ENCODE measurements at regions of chr12 and their contacts with region 1.

Region 1: GRCh38 chr12:51341259-51342007 is 5.0 kb downstream of the CELA1 start:
- DNase-seq: peak; percentile 76
- H3K4me3 Mint-ChIP-seq: no peak overlapping the region
- H3K27ac Mint-ChIP-seq: no peak overlapping the region
- H3K4me1 Mint-ChIP-seq: peaks cover 11% of the 10 kb centered on the region
- H3K27me3 Mint-ChIP-seq: no peaks in the 10 kb centered on the region

Region 2: GRCh38 chr12:51217968-51218606 is 123.3 kb before region 1 on chr12 and contains the start of gene POU6F1:
- CTCF ChIA-PET with region 1: interaction called, 17 read pairs
- POLR2A ChIA-PET with region 1: no interaction called
- DNase-seq: peak; percentile 72
- H3K4me3 Mint-ChIP-seq: peak within 1 kb of the TSS; percentile 79
- H3K27ac Mint-ChIP-seq: peak within 1 kb of the TSS; percentile 65
- H3K4me1 Mint-ChIP-seq: peaks cover 16% of the 10 kb centered on the region
- H3K27me3 Mint-ChIP-seq: no peaks in the 10 kb centered on the region
- total RNA-seq, gene POU6F1: 4.1 to 4.8 TPM

Region 3: DNA sequence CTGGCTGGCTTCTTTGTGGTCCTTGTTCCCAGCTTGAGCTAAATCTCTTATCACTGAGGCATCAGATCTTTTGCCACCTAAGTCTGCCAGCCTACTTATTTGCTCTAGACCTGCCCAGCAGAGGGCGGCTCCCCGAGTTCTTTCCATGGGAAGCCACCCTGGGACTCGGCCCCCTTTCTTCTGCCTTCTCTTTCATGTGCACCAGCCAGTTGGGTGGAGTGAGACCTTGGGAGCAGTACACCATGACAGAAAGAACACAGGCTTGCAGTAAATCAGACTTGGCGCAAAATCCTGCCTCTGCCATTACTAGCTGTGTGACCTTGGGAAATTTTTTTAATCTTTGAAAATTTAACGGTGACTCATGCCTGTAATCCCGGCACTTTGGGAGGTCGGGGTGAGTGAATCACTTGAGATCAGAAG is 78.7 kb before region 1 on chr12:
- CTCF ChIA-PET with region 1: interaction called, 87 read pairs
- POLR2A ChIA-PET with region 1: interaction called, 3 read pairs
- DNase-seq: peak; percentile 48
- H3K4me3 Mint-ChIP-seq: no peak overlapping the region
- H3K27ac Mint-ChIP-seq: no peak overlapping the region
- H3K4me1 Mint-ChIP-seq: peaks cover 18% of the 10 kb centered on the region
- H3K27me3 Mint-ChIP-seq: peaks cover 2% of the 10 kb centered on the region

Region 4: DNA sequence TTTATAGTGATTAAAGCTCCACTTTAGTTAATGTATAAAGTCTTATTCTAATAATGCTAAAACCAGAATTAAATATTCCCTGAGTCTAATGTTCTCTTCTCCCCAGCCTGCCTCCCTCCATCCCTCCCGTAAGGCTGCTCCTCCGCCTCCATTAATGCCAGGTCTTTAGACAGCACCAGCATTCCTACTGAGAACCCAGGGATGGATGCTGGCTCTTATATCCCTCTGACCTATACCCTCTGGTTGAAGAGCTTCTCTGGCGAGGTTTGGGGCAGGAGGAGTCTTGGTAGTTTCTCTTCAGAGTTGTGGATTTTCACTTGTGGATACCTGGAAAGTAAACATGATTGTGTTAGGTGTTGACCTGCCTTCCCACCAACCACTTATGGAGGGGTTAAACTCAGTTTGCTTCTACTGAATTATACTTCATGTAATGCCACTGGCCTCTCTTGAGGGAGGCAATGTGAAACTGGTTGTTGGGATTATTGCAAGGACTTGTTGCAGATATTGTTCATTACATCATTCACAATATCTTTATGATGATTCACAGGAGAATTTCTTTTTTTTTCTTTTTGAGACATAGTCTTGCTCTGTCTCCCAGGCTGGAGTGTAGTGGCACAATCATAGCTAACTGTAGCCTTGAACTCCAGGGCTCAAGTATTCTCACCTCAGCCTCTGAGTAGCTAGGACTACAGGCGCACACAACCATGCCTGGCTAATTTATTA is 60.1 kb before region 1 on chr12:
- CTCF ChIA-PET with region 1: interaction called, 11 read pairs
- POLR2A ChIA-PET with region 1: no interaction called
- DNase-seq: no peak
- H3K4me3 Mint-ChIP-seq: no peak overlapping the region
- H3K27ac Mint-ChIP-seq: no peak overlapping the region
- H3K4me1 Mint-ChIP-seq: no peaks in the 10 kb centered on the region
- H3K27me3 Mint-ChIP-seq: no peaks in the 10 kb centered on the region

Region 5: DNA sequence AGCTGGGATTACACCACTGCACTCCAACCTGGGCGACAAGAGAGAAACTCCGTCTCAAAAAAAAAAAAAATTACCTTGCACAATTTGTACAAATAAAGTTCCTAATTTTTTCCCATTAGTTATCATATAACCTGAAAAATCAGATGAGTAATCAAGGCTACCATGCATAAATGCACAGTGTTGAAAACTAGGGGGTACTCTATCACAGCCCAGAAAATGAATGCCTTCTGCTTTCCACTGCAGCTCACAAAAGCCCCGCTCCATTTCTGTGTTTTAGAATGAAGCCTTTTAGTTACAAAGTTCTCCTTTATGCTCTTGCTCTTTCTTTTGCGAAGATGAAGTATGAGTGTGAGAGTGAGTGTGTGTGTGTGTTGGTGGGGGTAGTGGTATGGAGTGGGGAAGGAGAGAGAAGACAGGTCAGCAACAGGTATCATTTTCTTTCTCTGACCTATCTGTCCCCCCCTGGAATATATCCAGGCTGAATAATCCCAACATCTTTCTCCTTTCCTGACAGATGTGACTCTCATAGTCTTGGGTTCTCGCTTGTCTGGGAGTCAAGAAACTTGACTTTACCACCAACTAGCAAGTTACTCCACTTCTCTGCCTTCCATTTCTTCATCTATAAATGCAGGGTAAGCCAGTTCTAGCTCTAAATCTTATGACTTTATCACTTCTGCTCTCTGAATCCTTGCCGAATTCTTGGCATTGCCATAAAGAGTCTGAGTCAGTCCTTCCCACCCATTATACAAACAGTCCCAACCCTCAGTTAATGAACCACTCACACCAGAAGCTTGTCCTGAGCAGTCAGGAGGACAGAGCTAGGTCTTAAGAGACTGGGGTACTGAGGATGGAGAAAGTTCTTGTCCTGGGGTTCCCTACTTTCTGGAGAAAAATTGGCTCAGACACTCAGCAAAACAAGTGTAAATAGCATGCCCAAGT is 33.5 kb before region 1 on chr12:
- CTCF ChIA-PET with region 1: interaction called, 16 read pairs
- POLR2A ChIA-PET with region 1: no interaction called
- DNase-seq: no peak
- H3K4me3 Mint-ChIP-seq: no peak overlapping the region
- H3K27ac Mint-ChIP-seq: peak overlapping the region; percentile 47
- H3K4me1 Mint-ChIP-seq: peaks cover 39% of the 10 kb centered on the region
- H3K27me3 Mint-ChIP-seq: no peaks in the 10 kb centered on the region

Region 6: GRCh38 chr12:51326762-51327439 is 14.5 kb before region 1 on chr12:
- CTCF ChIA-PET with region 1: interaction called, 44 read pairs
- POLR2A ChIA-PET with region 1: interaction called, 65 read pairs
- DNase-seq: peak; percentile 24
- H3K4me3 Mint-ChIP-seq: peak overlapping the region; percentile 45
- H3K27ac Mint-ChIP-seq: peak overlapping the region; percentile 97
- H3K4me1 Mint-ChIP-seq: peaks cover 70% of the 10 kb centered on the region
- H3K27me3 Mint-ChIP-seq: peaks cover 2% of the 10 kb centered on the region

Region 7: DNA sequence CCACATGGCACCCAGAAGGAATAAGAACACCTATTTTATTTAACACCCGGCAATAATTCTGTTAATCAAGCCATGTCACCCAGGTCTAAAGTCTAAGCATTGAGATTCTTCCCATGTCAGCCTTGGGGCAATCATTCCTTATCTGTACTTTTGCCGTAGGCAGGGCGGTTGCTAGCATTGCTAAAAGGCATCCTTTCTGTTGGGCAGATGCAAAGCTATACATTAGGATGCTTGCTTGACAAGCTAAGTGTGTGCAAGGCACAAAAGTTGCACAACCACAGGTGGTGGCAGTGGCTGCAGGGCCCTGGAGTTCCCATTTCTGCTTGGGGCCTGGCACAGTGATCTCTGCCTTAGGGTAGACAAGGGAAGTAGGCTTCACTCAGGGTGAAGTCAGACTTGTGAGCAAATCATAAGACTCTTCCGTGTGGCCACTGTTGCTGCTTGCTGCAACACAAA is 62.3 kb after region 1 on chr12:
- CTCF ChIA-PET with region 1: no interaction called
- POLR2A ChIA-PET with region 1: no interaction called
- DNase-seq: no peak
- H3K4me3 Mint-ChIP-seq: no peak overlapping the region
- H3K27ac Mint-ChIP-seq: no peak overlapping the region
- H3K4me1 Mint-ChIP-seq: no peaks in the 10 kb centered on the region
- H3K27me3 Mint-ChIP-seq: no peaks in the 10 kb centered on the region